PC-9 (cell line): ENCODE measurements at regions of chr1 and their contacts with region 1.

Region 1: GRCh38 chr1:234164098-234164709 is 209.1 kb upstream of the COA6 start:
- DNase-seq: no peak
- H3K4me3 ChIP-seq: no peak overlapping the region
- H3K27ac ChIP-seq: no peak overlapping the region
- H3K4me1 ChIP-seq: no peaks in the 10 kb centered on the region
- H3K27me3 ChIP-seq: no peaks in the 10 kb centered on the region
- CTCF ChIP-seq: no peak

Region 2: DNA sequence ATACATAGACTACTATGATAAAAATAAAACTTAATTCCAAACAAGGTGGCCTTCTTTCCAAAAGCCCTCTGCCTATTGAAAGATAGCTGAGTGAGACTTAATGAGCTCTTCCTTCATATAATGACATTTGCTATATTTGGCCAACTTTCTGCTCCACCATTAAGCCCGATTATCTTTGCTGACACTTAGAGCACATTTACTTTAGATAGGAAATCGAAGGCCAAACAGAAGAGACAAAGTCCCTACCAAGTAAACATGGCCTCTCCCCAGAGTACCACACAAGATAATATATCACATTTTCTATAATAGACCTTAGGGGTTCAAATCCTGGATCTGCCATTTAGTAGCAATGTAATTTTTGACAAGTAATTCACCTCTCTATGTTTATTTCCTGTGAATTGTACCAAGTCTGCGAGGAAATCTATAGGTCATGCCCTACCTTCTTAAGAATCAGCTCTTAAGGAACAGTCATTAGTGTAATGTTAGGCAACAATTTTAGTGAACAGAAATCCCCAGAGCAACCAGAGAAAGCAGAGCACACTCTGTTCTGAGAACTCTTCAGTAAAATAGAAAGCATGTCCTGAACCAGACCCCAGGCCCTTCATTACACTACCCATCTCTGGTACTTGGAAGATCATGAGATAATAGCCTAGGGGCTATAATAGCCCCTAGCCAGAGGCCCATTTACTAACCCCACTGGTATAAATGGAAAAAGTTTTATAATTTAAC is 191.7 kb after region 1 on chr1:
- CTCF ChIA-PET with region 1: no interaction called
- POLR2A ChIA-PET with region 1: interaction called, 16 read pairs
- intact Hi-C with region 1: no loop called
- DNase-seq: no peak
- H3K4me3 ChIP-seq: no peak overlapping the region
- H3K27ac ChIP-seq: no peak overlapping the region
- H3K4me1 ChIP-seq: no peaks in the 10 kb centered on the region
- H3K27me3 ChIP-seq: no peaks in the 10 kb centered on the region
- CTCF ChIP-seq: no peak

Region 3: GRCh38 chr1:235136111-235136510 is 971.9 kb after region 1 on chr1:
- CTCF ChIA-PET with region 1: no interaction called
- POLR2A ChIA-PET with region 1: no interaction called
- intact Hi-C with region 1: no loop called
- DNase-seq: no peak
- H3K4me3 ChIP-seq: no peak overlapping the region
- H3K27ac ChIP-seq: no peak overlapping the region
- H3K4me1 ChIP-seq: no peaks in the 10 kb centered on the region
- H3K27me3 ChIP-seq: no peaks in the 10 kb centered on the region
- CTCF ChIP-seq: no peak